HCT116 (cell line): ENCODE measurements at regions of chr9 and their contacts with region 1.

Region 1: DNA sequence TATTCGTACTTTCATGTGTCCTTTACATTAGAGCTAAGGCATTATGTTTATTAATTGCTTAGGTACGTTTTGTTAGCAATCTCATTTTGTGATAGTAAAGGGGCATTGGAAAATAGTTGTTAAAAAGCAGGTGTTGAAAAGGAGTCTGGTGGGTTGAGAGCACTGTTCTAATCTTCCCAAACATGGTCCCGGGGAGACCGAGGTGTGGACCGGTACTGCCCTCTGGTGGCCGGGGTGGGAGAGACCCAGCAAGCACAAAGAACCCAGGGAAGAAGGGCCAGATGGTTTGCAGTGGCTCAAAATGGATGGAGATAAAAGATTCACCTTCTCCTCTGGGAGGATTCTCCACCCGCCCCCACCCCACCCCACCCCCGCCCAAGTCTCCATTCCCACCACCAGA is 26.1 kb downstream of the IDNK start:
- DNase-seq: peak; percentile 6
- ATAC-seq: peak; percentile 92
- H3K4me3 ChIP-seq: no peak overlapping the region
- H3K27ac ChIP-seq: no peak overlapping the region
- H3K4me1 ChIP-seq: no peaks in the 10 kb centered on the region
- H3K27me3 ChIP-seq: no peaks in the 10 kb centered on the region
- CTCF ChIP-seq: peak; percentile 36 to 83 (median 81); a peak in 5 of 6 replicates
- POLR2A ChIP-seq: no peak
- RAD21 ChIP-seq: peak; percentile 64

Region 2: GRCh38 chr9:83200531-83200930 is 448.5 kb before region 1 on chr9:
- CTCF ChIA-PET with region 1: interaction called, 3 read pairs
- POLR2A ChIA-PET with region 1: no interaction called
- RAD21 ChIA-PET with region 1: no interaction called
- intact Hi-C with region 1: loop called (anchors 2 kb)
- DNase-seq: no peak
- ATAC-seq: no peak
- H3K4me3 ChIP-seq: no peak overlapping the region
- H3K27ac ChIP-seq: no peak overlapping the region
- H3K4me1 ChIP-seq: no peaks in the 10 kb centered on the region
- H3K27me3 ChIP-seq: no peaks in the 10 kb centered on the region; the same call in 1 of the 2 replicates
- CTCF ChIP-seq: no peak
- POLR2A ChIP-seq: no peak
- RAD21 ChIP-seq: no peak

Region 3: DNA sequence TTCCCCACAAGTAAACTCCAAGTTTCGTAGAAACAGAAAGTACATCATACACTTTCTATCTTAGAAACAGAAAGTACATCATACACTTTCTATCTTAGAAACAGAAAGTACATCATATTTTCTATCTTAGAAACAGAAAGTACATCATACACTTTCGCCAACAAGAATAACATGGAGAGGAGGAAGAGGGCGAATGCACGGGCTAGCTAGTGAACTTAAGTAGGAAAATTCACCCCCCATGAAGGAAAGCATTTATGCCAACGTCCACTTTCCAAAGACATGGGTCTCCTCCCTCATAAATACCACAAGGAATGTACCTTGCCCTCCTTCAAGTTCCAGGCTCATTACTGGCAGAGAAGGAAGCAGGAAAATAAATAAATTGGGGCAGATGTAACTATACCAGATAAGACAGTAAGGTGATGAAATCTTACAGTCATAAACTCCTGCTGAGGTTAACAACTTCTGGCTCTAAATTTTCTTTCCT is 175.6 kb before region 1 on chr9:
- CTCF ChIA-PET with region 1: no interaction called
- POLR2A ChIA-PET with region 1: no interaction called
- RAD21 ChIA-PET with region 1: no interaction called
- intact Hi-C with region 1: no loop called
- DNase-seq: no peak
- ATAC-seq: no peak
- H3K4me3 ChIP-seq: no peak overlapping the region
- H3K27ac ChIP-seq: no peak overlapping the region
- H3K4me1 ChIP-seq: peaks cover 0 to 8% of the 10 kb centered on the region in 2 experiments; a peak in 1 of 4 replicates
- H3K27me3 ChIP-seq: no peaks in the 10 kb centered on the region
- CTCF ChIP-seq: no peak
- POLR2A ChIP-seq: no peak
- RAD21 ChIP-seq: no peak